Endothelial cell of umbilical vein (primary cell): ENCODE measurements at regions of chr14 and their contacts with region 1.

Region 1: DNA sequence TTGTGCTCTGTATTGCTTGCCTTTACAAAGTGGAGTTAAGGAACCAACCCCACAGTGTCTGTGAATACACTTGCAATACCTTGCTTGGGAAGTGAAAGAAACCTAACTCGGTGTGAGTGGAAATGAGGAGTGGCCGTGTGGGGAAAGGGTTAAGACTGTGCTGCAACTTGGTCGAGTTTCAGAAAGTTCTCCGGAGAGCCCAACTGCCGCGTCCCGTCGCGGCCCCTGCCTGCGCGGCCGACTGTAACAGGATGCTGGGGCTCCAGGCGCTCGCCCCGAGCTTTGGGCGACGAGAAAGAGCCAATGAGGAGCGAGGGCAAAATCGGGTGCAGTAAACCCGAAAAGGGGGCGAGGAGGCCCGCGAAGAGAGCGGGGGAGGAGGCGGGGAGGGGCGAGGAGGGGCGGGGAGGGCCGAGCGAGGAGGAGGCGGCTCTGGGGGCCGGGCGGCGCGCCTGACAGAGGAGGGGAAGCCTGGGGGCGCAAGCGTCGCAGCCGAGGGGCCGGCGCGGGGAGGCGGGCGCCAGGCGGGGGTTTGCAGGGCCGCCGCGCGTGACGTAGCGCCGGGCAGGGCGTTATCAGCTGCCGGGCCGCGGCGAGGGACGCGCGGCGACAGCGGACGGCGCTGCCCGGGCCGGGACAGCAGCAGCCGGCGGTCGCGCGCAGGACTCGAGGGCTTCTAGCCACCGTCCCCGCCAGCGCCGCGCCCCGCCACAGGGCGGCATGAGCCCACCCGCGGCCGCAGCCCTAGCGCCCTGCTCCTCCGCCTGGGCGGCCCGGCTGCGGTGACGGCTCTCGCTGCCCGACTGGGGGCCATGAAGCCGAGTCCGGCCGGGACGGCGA is at the start of gene DACT1:
- DNase-seq: peak; percentile 67
- H3K4me3 ChIP-seq: peak within 1 kb of the TSS; percentile 19 to 60 (median 41)
- H3K27ac ChIP-seq: no peak within 1 kb of the TSS
- H3K4me1 ChIP-seq: peaks cover 8% of the 10 kb centered on the region
- H3K27me3 ChIP-seq: peaks cover 30 to 51% of the 10 kb centered on the region in 2 experiments
- CTCF ChIP-seq: no peak
- POLR2A ChIP-seq: no peak
- total RNA-seq, gene DACT1: 0.27 and 0.37 TPM in 2 replicates

Region 2: DNA sequence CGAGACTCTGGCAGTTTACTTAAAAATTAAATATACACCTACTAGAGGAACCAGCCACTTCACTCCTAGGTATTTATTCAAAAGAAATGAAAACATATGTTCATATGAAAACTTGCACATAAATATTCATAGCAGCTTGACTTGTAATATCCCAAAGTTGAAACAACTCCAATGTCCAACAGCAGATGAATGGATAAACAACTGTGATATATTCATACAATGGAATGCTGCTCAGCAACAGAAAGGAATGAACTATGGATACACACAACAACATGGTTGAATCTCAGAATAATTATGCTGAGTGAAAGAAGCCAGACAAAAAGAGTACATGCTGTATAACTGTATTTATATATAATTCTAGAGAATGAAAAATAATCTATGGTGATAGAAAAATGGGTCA is 53.2 kb before region 1 on chr14:
- CTCF ChIA-PET with region 1: no interaction called
- POLR2A ChIA-PET with region 1: no interaction called
- dilution Hi-C with region 1: no loop called
- intact Hi-C with region 1: no loop called
- DNase-seq: no peak
- H3K4me3 ChIP-seq: no peak overlapping the region
- H3K27ac ChIP-seq: no peak overlapping the region
- H3K4me1 ChIP-seq: no peaks in the 10 kb centered on the region
- H3K27me3 ChIP-seq: peaks cover 0 to 2% of the 10 kb centered on the region in 2 experiments
- CTCF ChIP-seq: no peak
- POLR2A ChIP-seq: no peak

Region 3: GRCh38 chr14:58749066-58749669 is 111.6 kb after region 1 on chr14:
- CTCF ChIA-PET with region 1: no interaction called
- POLR2A ChIA-PET with region 1: no interaction called
- dilution Hi-C with region 1: no loop called
- intact Hi-C with region 1: loop called (anchors 2 kb)
- DNase-seq: peak; percentile 45
- H3K4me3 ChIP-seq: no peak overlapping the region
- H3K27ac ChIP-seq: no peak overlapping the region
- H3K4me1 ChIP-seq: peaks cover 17% of the 10 kb centered on the region
- H3K27me3 ChIP-seq: no peaks in the 10 kb centered on the region
- CTCF ChIP-seq: no peak
- POLR2A ChIP-seq: no peak

Region 4: DNA sequence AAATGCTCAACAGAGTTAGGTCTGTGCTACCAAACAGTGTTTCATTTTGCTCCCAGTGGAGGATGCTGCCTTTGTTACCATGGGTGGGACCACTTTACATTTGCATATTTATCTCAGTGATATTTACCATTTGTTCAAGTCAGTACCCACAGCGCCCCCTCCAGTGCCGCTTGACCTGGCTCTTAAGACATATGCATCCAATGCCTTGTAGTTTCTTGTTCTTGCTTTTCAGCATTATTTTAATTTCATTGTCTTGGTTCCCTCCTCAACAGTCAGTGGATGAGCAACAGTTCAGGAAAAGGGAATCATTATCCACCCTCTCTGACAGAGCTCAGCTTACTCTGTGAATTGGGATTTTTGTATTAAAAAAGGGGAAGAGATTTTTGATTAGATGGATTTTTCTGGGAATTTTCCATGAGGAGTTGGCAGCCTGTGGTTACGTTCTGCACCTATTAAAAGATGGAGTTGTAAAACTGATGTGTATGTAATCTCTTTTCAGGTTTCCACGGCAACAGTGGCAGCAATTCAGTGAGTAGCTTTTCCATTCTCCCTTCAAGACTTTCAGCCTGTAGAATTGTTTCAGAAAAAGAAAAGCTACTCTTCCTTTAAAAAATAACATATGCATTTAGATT is 310.3 kb after region 1 on chr14:
- CTCF ChIA-PET with region 1: no interaction called
- POLR2A ChIA-PET with region 1: no interaction called
- dilution Hi-C with region 1: no loop called
- intact Hi-C with region 1: loop called (anchors 10 kb)
- DNase-seq: peak; percentile 3
- H3K4me3 ChIP-seq: no peak overlapping the region
- H3K27ac ChIP-seq: no peak overlapping the region
- H3K4me1 ChIP-seq: no peaks in the 10 kb centered on the region
- H3K27me3 ChIP-seq: peaks cover 0 to 2% of the 10 kb centered on the region in 2 experiments
- CTCF ChIP-seq: no peak
- POLR2A ChIP-seq: no peak

Region 5: GRCh38 chr14:59020382-59020781 is 382.8 kb after region 1 on chr14:
- CTCF ChIA-PET with region 1: interaction called, 6 read pairs
- POLR2A ChIA-PET with region 1: no interaction called
- dilution Hi-C with region 1: no loop called
- intact Hi-C with region 1: loop called (anchors 1 kb)
- DNase-seq: peak; percentile 35
- H3K4me3 ChIP-seq: no peak overlapping the region
- H3K27ac ChIP-seq: no peak overlapping the region
- H3K4me1 ChIP-seq: no peaks in the 10 kb centered on the region
- H3K27me3 ChIP-seq: peaks cover 9 to 20% of the 10 kb centered on the region in 2 experiments
- CTCF ChIP-seq: peak; percentile 17 to 43
- POLR2A ChIP-seq: no peak

Region 6: DNA sequence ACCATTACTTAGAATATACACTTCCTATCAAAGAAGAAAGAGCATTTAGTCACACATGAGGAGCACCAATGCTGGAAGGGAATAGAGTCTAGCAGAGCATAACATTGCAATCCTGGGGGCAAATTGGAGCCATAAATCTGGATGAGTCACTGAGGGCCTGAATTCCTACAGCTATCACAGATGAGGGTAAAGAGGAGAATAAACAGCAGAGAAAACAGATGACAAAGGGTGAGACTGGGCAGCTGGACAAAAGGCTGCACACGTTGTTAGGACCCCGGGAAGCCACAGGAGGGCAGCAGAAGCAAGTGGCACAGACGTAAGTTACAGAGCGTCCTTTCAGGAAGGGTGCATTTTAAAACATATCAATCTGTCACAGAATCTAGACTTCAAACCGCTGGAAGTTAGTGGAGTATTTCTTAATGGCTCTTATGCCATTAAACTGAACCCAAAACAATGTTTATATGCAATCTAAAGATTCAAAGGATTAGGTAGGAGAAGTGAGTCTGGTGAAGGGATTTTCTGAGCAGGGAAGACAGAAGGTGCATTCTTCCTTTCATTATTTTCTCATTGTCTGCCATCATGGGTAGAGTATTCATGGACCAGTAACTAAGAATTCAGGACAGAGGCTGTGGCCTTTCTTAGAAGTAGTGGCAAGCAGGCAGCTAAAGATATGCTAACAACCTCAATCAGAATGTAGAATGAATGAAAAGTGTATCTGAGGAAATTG is 391.0 kb after region 1 on chr14:
- CTCF ChIA-PET with region 1: interaction called, 4 read pairs
- POLR2A ChIA-PET with region 1: no interaction called
- dilution Hi-C with region 1: no loop called
- intact Hi-C with region 1: loop called (anchors 1 kb)
- DNase-seq: peak; percentile 66
- H3K4me3 ChIP-seq: no peak overlapping the region
- H3K27ac ChIP-seq: no peak overlapping the region
- H3K4me1 ChIP-seq: no peaks in the 10 kb centered on the region
- H3K27me3 ChIP-seq: peaks cover 5 to 8% of the 10 kb centered on the region in 2 experiments
- CTCF ChIP-seq: peak; percentile 82 to 87
- POLR2A ChIP-seq: no peak

Region 7: GRCh38 chr14:59055439-59056045 is 417.9 kb after region 1 on chr14:
- CTCF ChIA-PET with region 1: interaction called, 12 read pairs
- POLR2A ChIA-PET with region 1: no interaction called
- dilution Hi-C with region 1: no loop called
- intact Hi-C with region 1: no loop called
- DNase-seq: peak; percentile 48
- H3K4me3 ChIP-seq: no peak overlapping the region
- H3K27ac ChIP-seq: no peak overlapping the region
- H3K4me1 ChIP-seq: no peaks in the 10 kb centered on the region
- H3K27me3 ChIP-seq: peaks cover 2 to 5% of the 10 kb centered on the region in 2 experiments
- CTCF ChIP-seq: peak; percentile 15 to 57
- POLR2A ChIP-seq: no peak

Region 8: GRCh38 chr14:59126710-59127432 is 489.3 kb after region 1 on chr14:
- CTCF ChIA-PET with region 1: interaction called, 4 read pairs
- POLR2A ChIA-PET with region 1: no interaction called
- dilution Hi-C with region 1: no loop called
- intact Hi-C with region 1: loop called (anchors 5 kb)
- DNase-seq: peak; percentile 64
- H3K4me3 ChIP-seq: no peak overlapping the region
- H3K27ac ChIP-seq: no peak overlapping the region
- H3K4me1 ChIP-seq: no peaks in the 10 kb centered on the region
- H3K27me3 ChIP-seq: peaks cover 5 to 6% of the 10 kb centered on the region in 2 experiments
- CTCF ChIP-seq: peak; percentile 58 to 60
- POLR2A ChIP-seq: no peak